ENCODE measurements at regions of chr17 and their contacts with region 1.

Region 1: DNA sequence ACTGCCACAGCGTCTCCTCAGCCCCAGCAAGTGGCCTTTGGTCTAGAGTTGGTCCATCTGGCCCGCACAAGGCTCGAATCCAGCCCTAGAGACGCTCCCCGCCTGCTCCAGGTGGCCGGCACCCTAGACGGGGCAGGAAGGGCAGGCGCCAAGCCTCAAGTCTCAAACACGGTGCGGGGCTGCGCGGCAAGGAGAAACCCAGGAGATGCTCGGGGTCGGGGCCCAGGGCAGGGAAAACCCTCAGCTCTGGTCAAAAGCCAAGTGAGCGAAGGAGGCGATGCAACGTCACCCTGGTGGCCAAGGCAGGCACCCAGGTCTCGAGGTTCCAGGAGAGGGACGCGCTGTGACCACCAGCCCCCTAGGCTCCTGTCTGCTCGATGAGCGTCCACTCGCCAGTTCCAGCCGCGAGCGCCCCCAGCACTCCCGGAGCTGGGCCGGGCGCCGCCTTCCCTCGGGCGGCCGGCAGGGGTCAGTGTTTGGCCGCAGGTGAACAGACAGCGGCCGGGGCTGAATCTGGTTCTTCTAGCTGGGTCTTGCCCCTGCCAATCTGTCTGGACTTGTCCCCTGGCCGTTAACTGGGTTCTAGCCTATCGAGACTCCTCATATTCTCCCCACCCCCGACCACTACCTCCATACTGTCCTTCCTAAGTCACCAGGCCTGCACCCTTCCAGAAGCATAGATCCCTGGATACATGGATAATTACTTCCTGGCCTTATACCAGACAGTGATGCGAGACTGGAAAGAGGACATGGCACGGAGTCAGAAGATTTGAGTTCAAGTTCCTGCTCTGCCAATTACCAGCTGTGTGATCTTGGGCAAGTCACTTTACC is 44.0 kb downstream of the PRAC1 start:
- DNase-seq: peak; percentile 48 to 83 (median 64)
- ATAC-seq: peak; percentile 94
- H3K4me3 ChIP-seq: no peak overlapping the region
- H3K4me3 Mint-ChIP-seq: no peak overlapping the region
- H3K27ac ChIP-seq: no peak overlapping the region
- H3K27ac Mint-ChIP-seq: no peak overlapping the region
- H3K4me1 ChIP-seq: peaks cover 4% of the 10 kb centered on the region
- H3K4me1 Mint-ChIP-seq: no peaks in the 10 kb centered on the region
- H3K27me3 ChIP-seq: peaks cover 0 to 11% of the 10 kb centered on the region in 2 experiments
- H3K27me3 Mint-ChIP-seq: peaks cover 47% of the 10 kb centered on the region
- CTCF ChIP-seq: peak; percentile 81

Region 2: GRCh38 chr17:48663134-48663924 is 15.0 kb before region 1 on chr17:
- CTCF ChIA-PET with region 1: interaction called, 35 read pairs
- POLR2A ChIA-PET with region 1: interaction called, 3 read pairs
- intact Hi-C with region 1: no loop called
- DNase-seq: no peak
- ATAC-seq: no peak
- H3K4me3 ChIP-seq: no peak overlapping the region
- H3K4me3 Mint-ChIP-seq: no peak overlapping the region
- H3K27ac ChIP-seq: no peak overlapping the region
- H3K27ac Mint-ChIP-seq: no peak overlapping the region
- H3K4me1 ChIP-seq: no peaks in the 10 kb centered on the region
- H3K4me1 Mint-ChIP-seq: no peaks in the 10 kb centered on the region
- H3K27me3 ChIP-seq: no peaks in the 10 kb centered on the region
- H3K27me3 Mint-ChIP-seq: peaks cover 17% of the 10 kb centered on the region
- CTCF ChIP-seq: no peak

Region 3: GRCh38 chr17:48718761-48719641 is 40.6 kb after region 1 on chr17:
- CTCF ChIA-PET with region 1: interaction called, 17 read pairs
- POLR2A ChIA-PET with region 1: no interaction called
- intact Hi-C with region 1: no loop called
- DNase-seq: peak in 1 of 9 experiments; percentile 38
- ATAC-seq: peak; percentile 21
- H3K4me3 ChIP-seq: no peak overlapping the region
- H3K4me3 Mint-ChIP-seq: no peak overlapping the region
- H3K27ac ChIP-seq: no peak overlapping the region
- H3K27ac Mint-ChIP-seq: no peak overlapping the region
- H3K4me1 ChIP-seq: peaks cover 36% of the 10 kb centered on the region
- H3K4me1 Mint-ChIP-seq: peaks cover 33% of the 10 kb centered on the region
- H3K27me3 ChIP-seq: peaks cover 64 to 65% of the 10 kb centered on the region in 2 experiments
- H3K27me3 Mint-ChIP-seq: peaks cover 65% of the 10 kb centered on the region
- CTCF ChIP-seq: no peak

Region 4: DNA sequence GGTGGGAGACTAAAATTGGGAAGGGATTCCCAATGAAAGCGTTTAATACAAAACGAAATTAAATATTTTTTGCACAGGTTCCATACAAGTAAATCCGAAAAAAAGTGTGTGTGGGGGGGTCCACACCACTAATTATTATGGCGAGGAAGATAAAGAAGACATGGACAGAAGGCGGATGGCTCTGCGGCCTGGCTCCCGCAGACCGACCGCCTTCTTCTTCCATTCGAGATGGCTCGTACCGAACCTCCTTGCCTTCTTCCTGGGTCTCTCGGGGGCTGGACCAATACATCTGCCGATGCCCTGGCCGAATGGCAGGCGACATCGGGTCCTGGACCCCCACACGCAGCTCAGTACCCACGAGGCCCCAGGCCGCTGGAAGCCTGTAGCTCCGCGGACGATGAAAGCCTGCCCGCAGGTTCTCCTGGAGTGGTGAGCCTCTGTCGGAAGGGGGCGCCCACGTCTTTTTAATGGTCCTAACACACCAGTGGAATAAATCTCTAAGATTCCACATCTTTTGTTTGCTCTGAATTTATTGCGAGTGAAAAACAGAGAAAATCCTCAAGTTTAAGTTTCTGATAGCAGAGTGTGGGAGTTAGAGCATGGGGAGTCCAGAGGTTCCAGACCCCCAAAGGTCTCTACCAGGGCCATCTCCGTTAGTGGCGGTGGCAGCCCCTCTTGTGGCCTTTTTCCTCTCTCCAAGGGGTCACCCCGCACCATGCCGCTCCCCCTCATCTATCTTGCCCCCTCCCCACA is 46.1 kb after region 1 on chr17:
- CTCF ChIA-PET with region 1: interaction called, 17 read pairs
- POLR2A ChIA-PET with region 1: no interaction called
- intact Hi-C with region 1: no loop called
- DNase-seq: peak; percentile 56 to 81 (median 78)
- ATAC-seq: peak; percentile 74
- H3K4me3 ChIP-seq: peak overlapping the region in 1 of 2 experiments; percentile 36
- H3K4me3 Mint-ChIP-seq: peak overlapping the region; percentile 69
- H3K27ac ChIP-seq: no peak overlapping the region
- H3K27ac Mint-ChIP-seq: no peak overlapping the region
- H3K4me1 ChIP-seq: peaks cover 53% of the 10 kb centered on the region
- H3K4me1 Mint-ChIP-seq: peaks cover 52% of the 10 kb centered on the region
- H3K27me3 ChIP-seq: peaks cover 86 to 89% of the 10 kb centered on the region in 2 experiments
- H3K27me3 Mint-ChIP-seq: peaks cover 72% of the 10 kb centered on the region
- CTCF ChIP-seq: peak; percentile 75

Region 5: GRCh38 chr17:48791128-48792032 is 113.0 kb after region 1 on chr17:
- CTCF ChIA-PET with region 1: interaction called, 49 read pairs
- POLR2A ChIA-PET with region 1: no interaction called
- intact Hi-C with region 1: loop called (anchors 1 to 2 kb)
- DNase-seq: peak in 4 of 9 experiments; percentile 16 to 49 (median 24)
- ATAC-seq: no peak
- H3K4me3 ChIP-seq: no peak overlapping the region
- H3K4me3 Mint-ChIP-seq: no peak overlapping the region
- H3K27ac ChIP-seq: no peak overlapping the region
- H3K27ac Mint-ChIP-seq: no peak overlapping the region
- H3K4me1 ChIP-seq: peaks cover 8% of the 10 kb centered on the region
- H3K4me1 Mint-ChIP-seq: peaks cover 3% of the 10 kb centered on the region
- H3K27me3 ChIP-seq: peaks cover 2 to 3% of the 10 kb centered on the region in 2 experiments
- H3K27me3 Mint-ChIP-seq: peaks cover 43% of the 10 kb centered on the region
- CTCF ChIP-seq: no peak

Region 6: DNA sequence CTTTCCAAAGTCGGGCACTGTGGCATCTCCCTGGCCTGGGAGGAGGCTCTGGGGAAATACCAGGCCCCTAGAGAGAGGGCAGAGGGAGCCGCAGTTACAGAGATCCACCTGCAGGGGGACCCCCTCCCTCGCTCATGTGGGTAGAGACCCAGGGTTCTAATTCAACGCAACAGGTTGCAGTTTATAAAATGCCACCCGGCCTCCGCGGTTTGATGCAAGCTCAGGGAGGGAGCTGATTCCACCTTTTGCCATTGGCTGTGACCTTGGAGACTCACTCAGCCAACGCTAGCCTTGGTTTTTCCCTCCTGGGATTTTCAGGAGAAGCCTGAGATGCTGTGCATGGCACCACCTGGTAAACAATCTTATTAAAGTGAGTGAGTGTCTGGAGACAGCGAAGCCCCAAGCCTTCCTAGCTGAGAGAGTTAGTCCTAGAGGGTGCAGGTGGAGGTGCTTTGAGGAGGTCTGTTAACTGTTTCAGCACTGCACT is 126.6 kb after region 1 on chr17:
- CTCF ChIA-PET with region 1: interaction called, 23 read pairs
- POLR2A ChIA-PET with region 1: no interaction called
- intact Hi-C with region 1: loop called in 1 of 2 experiments (anchors 1 kb)
- DNase-seq: peak; percentile 50 to 80 (median 67)
- ATAC-seq: peak; percentile 99
- H3K4me3 ChIP-seq: no peak overlapping the region
- H3K4me3 Mint-ChIP-seq: no peak overlapping the region
- H3K27ac ChIP-seq: no peak overlapping the region
- H3K27ac Mint-ChIP-seq: no peak overlapping the region
- H3K4me1 ChIP-seq: no peaks in the 10 kb centered on the region
- H3K4me1 Mint-ChIP-seq: no peaks in the 10 kb centered on the region
- H3K27me3 ChIP-seq: no peaks in the 10 kb centered on the region
- H3K27me3 Mint-ChIP-seq: peaks cover 14% of the 10 kb centered on the region
- CTCF ChIP-seq: peak; percentile 87

Region 7: GRCh38 chr17:49031965-49032928 is 353.9 kb after region 1 on chr17:
- CTCF ChIA-PET with region 1: interaction called, 12 read pairs
- POLR2A ChIA-PET with region 1: interaction called, 3 read pairs
- intact Hi-C with region 1: loop called in 1 of 2 experiments (anchors 1 kb)
- DNase-seq: peak in 8 of 9 experiments; percentile 3 to 72 (median 34)
- ATAC-seq: peak; percentile 82
- H3K4me3 ChIP-seq: no peak overlapping the region
- H3K4me3 Mint-ChIP-seq: no peak overlapping the region
- H3K27ac ChIP-seq: no peak overlapping the region
- H3K27ac Mint-ChIP-seq: no peak overlapping the region
- H3K4me1 ChIP-seq: no peaks in the 10 kb centered on the region
- H3K4me1 Mint-ChIP-seq: peaks cover 3% of the 10 kb centered on the region
- H3K27me3 ChIP-seq: peaks cover 0 to 2% of the 10 kb centered on the region in 2 experiments
- H3K27me3 Mint-ChIP-seq: peaks cover 13% of the 10 kb centered on the region
- CTCF ChIP-seq: peak; percentile 84

Region 8: DNA sequence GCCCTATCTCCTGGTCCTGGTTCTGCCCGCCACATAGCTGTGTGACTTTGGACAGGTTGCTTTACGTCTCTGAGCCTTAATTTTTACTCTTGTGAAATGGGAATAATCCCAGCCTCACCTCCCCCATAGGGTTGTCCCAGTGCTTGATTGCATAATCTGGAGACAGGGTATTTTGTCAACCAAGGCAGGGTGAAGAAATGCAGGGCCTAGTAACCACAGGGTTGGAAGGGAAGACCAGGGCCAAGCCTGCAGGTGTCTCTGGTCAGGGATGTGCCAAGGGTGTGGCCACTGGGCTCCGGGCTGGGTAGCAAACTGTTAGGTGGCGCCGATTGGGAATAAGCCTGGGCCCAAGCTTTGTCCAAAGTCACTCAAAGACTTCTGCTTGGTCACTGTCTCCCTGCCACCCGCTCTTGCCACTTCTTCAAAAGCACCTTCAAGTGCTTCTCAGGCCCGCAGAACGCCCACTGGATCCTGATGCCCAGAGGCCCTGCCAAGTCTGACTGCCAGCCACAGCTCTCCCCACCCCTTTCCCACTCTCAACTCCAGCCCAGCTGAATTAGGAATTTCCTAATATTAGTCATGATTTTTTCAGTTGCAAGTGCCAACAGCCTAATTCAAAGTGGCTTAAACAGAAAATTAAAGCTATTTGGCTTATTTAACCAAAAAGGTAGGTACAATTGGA is 1543.6 kb after region 1 on chr17:
- CTCF ChIA-PET with region 1: no interaction called
- POLR2A ChIA-PET with region 1: no interaction called
- intact Hi-C with region 1: no loop called
- DNase-seq: no peak
- ATAC-seq: no peak
- H3K4me3 ChIP-seq: no peak overlapping the region
- H3K4me3 Mint-ChIP-seq: no peak overlapping the region
- H3K27ac ChIP-seq: no peak overlapping the region
- H3K27ac Mint-ChIP-seq: no peak overlapping the region
- H3K4me1 ChIP-seq: no peaks in the 10 kb centered on the region
- H3K4me1 Mint-ChIP-seq: peaks cover 4% of the 10 kb centered on the region
- H3K27me3 ChIP-seq: no peaks in the 10 kb centered on the region
- H3K27me3 Mint-ChIP-seq: peaks cover 7% of the 10 kb centered on the region
- CTCF ChIP-seq: no peak

Measured in CD8-positive, alpha-beta T cell (primary cell).